AG04449 (cell line): ENCODE measurements at regions of chr14 and their contacts with region 1.

Region 1: GRCh38 chr14:96424109-96424989 is 32.4 kb downstream of the AK7 start:
- DNase-seq: peak; percentile 16
- H3K4me3 ChIP-seq: peak overlapping the region; percentile 52
- CTCF ChIP-seq: peak; percentile 55

Region 2: GRCh38 chr14:96117100-96117897 is 307.1 kb before region 1 on chr14:
- CTCF ChIA-PET with region 1: no interaction called
- POLR2A ChIA-PET with region 1: no interaction called
- DNase-seq: no peak
- H3K4me3 ChIP-seq: no peak overlapping the region
- CTCF ChIP-seq: peak; percentile 16

Region 3: DNA sequence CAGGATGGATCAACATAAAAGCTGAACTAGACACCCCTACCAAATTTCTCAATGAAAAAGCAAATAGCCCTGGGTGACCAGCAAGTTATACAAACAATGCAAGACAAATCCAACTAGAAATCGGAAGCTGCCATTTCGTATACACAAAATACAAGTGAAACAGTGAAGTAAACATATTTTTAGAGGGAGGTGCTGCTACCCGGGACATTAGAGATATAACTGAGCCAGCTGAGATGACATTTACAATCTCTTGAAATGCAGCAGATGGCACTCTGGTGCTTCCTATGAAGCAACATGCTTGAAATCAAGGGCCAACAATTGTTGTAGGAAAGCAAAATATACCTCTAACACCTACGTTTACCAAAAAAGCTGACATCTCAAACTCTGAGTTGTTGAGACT is 142.9 kb before region 1 on chr14:
- CTCF ChIA-PET with region 1: interaction called, 19 read pairs
- POLR2A ChIA-PET with region 1: no interaction called
- DNase-seq: no peak
- H3K4me3 ChIP-seq: no peak overlapping the region
- CTCF ChIP-seq: no peak

Region 4: DNA sequence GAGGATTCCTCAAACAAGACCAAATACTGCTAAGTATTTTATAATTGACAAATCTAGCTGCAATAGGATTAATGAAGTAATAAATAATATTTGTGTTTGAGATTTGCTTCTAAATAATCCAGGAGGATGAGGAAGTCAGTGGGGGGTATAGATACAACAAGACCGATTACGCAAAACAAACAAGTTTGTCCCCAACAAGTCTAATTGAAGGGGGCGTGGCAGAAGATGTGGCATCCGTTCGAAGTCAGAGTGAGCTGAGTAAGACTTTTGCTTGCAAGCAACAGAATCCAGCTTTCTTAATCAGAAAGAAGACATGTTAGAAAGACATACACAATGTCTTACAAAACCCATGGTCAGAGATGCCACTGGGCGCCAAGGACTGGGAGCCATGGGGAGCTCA is 12.8 kb before region 1 on chr14:
- CTCF ChIA-PET with region 1: interaction called, 11 read pairs
- POLR2A ChIA-PET with region 1: no interaction called
- DNase-seq: no peak
- H3K4me3 ChIP-seq: no peak overlapping the region
- CTCF ChIP-seq: no peak